Psoas muscle (tissue), 8 donors: ENCODE measurements at regions of chr21 and their contacts with region 1.

Region 1: GRCh38 chr21:36141513-36141925 is 6.6 kb downstream of the CBR3 start:
- DNase-seq: peak; percentile 53 to 85
- ATAC-seq: peak; percentile 93 to 98 (median 96)
- H3K4me3 ChIP-seq: no peak overlapping the region
- H3K27ac ChIP-seq: no peak overlapping the region
- H3K4me1 ChIP-seq: no peaks in the 10 kb centered on the region
- H3K27me3 ChIP-seq: no peaks in the 10 kb centered on the region
- CTCF ChIP-seq: peak; percentile 89

Region 2: DNA sequence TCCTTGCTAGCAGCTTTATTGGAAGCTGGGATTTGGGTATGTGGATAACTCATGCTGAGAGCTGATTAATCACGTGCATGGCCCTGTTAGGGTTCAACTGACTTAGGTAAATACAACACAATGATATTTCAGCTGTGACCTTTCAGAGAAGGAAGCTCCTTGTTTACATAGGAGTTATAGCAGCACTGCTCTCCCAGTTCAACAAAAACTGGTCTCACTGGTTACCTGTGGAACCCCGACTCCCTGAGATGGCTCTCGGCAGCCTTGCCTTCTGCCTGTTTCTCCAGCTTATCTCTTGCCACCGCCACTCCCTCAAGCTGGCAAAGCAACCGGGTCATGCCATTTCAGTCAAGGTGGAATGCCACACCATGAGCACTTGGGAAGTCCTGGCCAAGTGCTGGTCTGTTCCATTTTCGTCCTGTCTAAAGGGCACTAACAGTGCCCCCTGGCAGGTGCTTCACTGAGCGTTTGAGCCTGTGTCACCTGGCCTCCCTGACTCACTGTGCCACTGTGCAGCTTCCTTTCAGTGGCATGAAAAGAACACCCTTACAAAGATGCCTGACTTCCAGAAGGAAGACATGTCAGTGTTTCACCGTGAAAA is 46.7 kb after region 1 on chr21:
- intact Hi-C with region 1: no loop called
- DNase-seq: peak in 1 of 2 donors; percentile 87
- ATAC-seq: peak; percentile 95 to 98 (median 98)
- H3K4me3 ChIP-seq: peak overlapping the region; percentile 3
- H3K27ac ChIP-seq: peak overlapping the region; percentile 48
- H3K4me1 ChIP-seq: peaks cover 21% of the 10 kb centered on the region
- H3K27me3 ChIP-seq: no peaks in the 10 kb centered on the region
- CTCF ChIP-seq: no peak

Region 3: GRCh38 chr21:36209626-36210171 is 68.2 kb after region 1 on chr21:
- intact Hi-C with region 1: loop called (anchors 1 to 2 kb)
- DNase-seq: no peak
- ATAC-seq: peak in 3 of 4 donors; percentile 32 to 45 (median 42)
- H3K4me3 ChIP-seq: no peak overlapping the region
- H3K27ac ChIP-seq: no peak overlapping the region
- H3K4me1 ChIP-seq: peaks cover 3% of the 10 kb centered on the region
- H3K27me3 ChIP-seq: no peaks in the 10 kb centered on the region
- CTCF ChIP-seq: peak; percentile 48

Region 4: GRCh38 chr21:36255663-36256062 is 114.1 kb after region 1 on chr21:
- intact Hi-C with region 1: no loop called
- DNase-seq: no peak
- ATAC-seq: no peak
- H3K4me3 ChIP-seq: no peak overlapping the region
- H3K27ac ChIP-seq: no peak overlapping the region
- H3K4me1 ChIP-seq: no peaks in the 10 kb centered on the region
- H3K27me3 ChIP-seq: no peaks in the 10 kb centered on the region
- CTCF ChIP-seq: no peak

Region 5: GRCh38 chr21:36325373-36326010 is 184.0 kb after region 1 on chr21:
- intact Hi-C with region 1: loop called (anchors 5 kb)
- DNase-seq: no peak
- ATAC-seq: peak in 3 of 4 donors; percentile 47 to 63 (median 49)
- H3K4me3 ChIP-seq: no peak overlapping the region
- H3K27ac ChIP-seq: peak overlapping the region; percentile 99
- H3K4me1 ChIP-seq: peaks cover 59% of the 10 kb centered on the region
- H3K27me3 ChIP-seq: no peaks in the 10 kb centered on the region
- CTCF ChIP-seq: no peak

Region 6: GRCh38 chr21:36330904-36331303 is 189.4 kb after region 1 on chr21:
- intact Hi-C with region 1: loop called (anchors 5 kb)
- DNase-seq: no peak
- ATAC-seq: peak; percentile 69 to 82 (median 78)
- H3K4me3 ChIP-seq: no peak overlapping the region
- H3K27ac ChIP-seq: peak overlapping the region; percentile 39
- H3K4me1 ChIP-seq: peaks cover 33% of the 10 kb centered on the region
- H3K27me3 ChIP-seq: no peaks in the 10 kb centered on the region
- CTCF ChIP-seq: peak; percentile 63